ENCODE measurements at regions of chr6 and their contacts with region 1.

Region 1: GRCh38 chr6:17101422-17102257 is at the start of gene STMND1:
- DNase-seq: peak in 27 of 42 donors; percentile 12 to 57 (median 31)

Region 2: DNA sequence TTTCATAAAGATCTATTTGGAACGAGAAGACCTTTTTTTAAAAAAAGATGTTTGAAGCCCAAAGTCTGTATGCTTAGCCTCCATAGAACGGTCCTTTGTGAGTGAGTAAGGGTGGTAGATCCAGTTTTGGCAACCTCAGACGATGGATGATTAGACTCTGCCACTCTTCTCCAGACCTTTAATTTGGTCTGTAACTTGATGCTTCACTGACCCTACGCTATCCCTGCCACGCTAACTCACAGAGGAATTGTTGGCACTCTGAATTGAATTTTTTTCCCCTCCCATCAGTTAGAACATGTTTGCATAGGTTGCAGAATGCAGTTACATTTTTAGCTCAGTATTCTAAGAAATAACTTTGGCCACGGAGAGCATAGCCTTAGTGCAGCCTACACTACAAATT is 1178.4 kb after region 1 on chr6:
- intact Hi-C with region 1: loop called (anchors 10 kb)
- DNase-seq: no peak